ENCODE measurements at regions of chr17 and their contacts with region 1.

Region 1: GRCh38 chr17:64320613-64321553 is 57.8 kb upstream of the TEX2 start:
- DNase-seq: peak; percentile 58 to 74
- H3K4me3 ChIP-seq: no peak overlapping the region
- H3K27ac ChIP-seq: no peak overlapping the region
- H3K4me1 ChIP-seq: no peaks in the 10 kb centered on the region
- H3K27me3 ChIP-seq: no peaks in the 10 kb centered on the region
- CTCF ChIP-seq: peak; percentile 11 to 86 (median 86)
- EP300 ChIP-seq: no peak
- POLR2A ChIP-seq: no peak
- RAD21 ChIP-seq: peak; percentile 73 to 83

Region 2: DNA sequence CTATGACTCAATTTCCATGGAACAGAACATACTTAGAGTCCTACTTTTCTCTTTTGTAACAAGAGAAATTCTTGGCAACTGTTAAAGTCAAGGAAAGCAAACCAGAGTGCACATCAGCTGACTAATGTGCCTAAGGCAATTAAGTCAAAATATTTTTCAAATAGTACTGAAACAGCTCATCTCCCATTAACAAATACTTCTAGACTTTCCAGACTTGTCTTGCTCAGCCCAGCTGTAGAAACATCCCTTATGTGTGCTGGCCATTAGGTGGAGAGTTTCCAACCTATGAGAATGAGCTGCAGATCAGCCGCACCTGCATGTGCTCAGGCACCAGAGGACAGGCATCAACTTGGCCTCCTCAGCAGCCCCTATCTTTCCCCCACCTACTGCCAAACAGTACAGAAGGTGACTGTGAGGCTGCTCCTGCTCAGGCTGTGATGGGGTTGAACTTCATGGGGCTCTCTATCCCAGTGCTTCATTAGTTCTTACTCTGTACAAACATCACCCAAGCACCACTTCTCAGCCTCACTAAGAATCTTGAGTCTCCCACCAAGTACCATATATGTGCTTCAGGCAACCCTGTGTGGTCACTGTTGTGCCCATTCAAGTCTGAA is 90.0 kb before region 1 on chr17:
- CTCF ChIA-PET with region 1: no interaction called
- POLR2A ChIA-PET with region 1: no interaction called
- DNase-seq: no peak
- H3K4me3 ChIP-seq: no peak overlapping the region
- H3K27ac ChIP-seq: no peak overlapping the region
- H3K4me1 ChIP-seq: peaks cover 0 to 6% (median 1%) of the 10 kb centered on the region in 4 experiments; a peak in 3 of 7 replicates
- H3K27me3 ChIP-seq: no peaks in the 10 kb centered on the region
- CTCF ChIP-seq: no peak
- EP300 ChIP-seq: no peak
- POLR2A ChIP-seq: no peak
- RAD21 ChIP-seq: no peak

Region 3: GRCh38 chr17:64332502-64332901 is 11.6 kb after region 1 on chr17:
- CTCF ChIA-PET with region 1: interaction called, 11 read pairs
- POLR2A ChIA-PET with region 1: no interaction called
- DNase-seq: no peak
- H3K4me3 ChIP-seq: no peak overlapping the region
- H3K27ac ChIP-seq: no peak overlapping the region
- H3K4me1 ChIP-seq: 0 out of 7 replicates have a peak, but pooled peaks cover 0 to 2% (median 0%) of the 10 kb centered on the region in 4 experiments
- H3K27me3 ChIP-seq: peaks cover 0 to 8% (median 5%) of the 10 kb centered on the region in 4 experiments; a peak in 4 of 7 replicates
- CTCF ChIP-seq: no peak
- EP300 ChIP-seq: no peak
- POLR2A ChIP-seq: no peak
- RAD21 ChIP-seq: no peak

Region 4: GRCh38 chr17:64357191-64357981 is 36.5 kb after region 1 on chr17:
- CTCF ChIA-PET with region 1: interaction called, 11 read pairs
- POLR2A ChIA-PET with region 1: no interaction called
- DNase-seq: no peak
- H3K4me3 ChIP-seq: no peak overlapping the region
- H3K27ac ChIP-seq: no peak overlapping the region
- H3K4me1 ChIP-seq: no peaks in the 10 kb centered on the region
- H3K27me3 ChIP-seq: no peaks in the 10 kb centered on the region
- CTCF ChIP-seq: peak; percentile 8 to 32 (median 24); a peak in 2 of 4 replicates
- EP300 ChIP-seq: no peak
- POLR2A ChIP-seq: no peak
- RAD21 ChIP-seq: 0 out of 4 replicates have a peak, but pooled peaks of 1 of the 2 experiments have one; percentile 2

Region 5: GRCh38 chr17:64411999-64412771 is 91.3 kb after region 1 on chr17:
- CTCF ChIA-PET with region 1: interaction called, 348 read pairs
- POLR2A ChIA-PET with region 1: interaction called, 4 read pairs
- DNase-seq: peak; percentile 59 to 67
- H3K4me3 ChIP-seq: peak overlapping the region in 3 of 4 experiments; percentile 31 to 51 (median 34); a peak in 6 of 8 replicates
- H3K27ac ChIP-seq: peak overlapping the region; percentile 75
- H3K4me1 ChIP-seq: peaks cover 16 to 27% (median 18%) of the 10 kb centered on the region in 4 experiments
- H3K27me3 ChIP-seq: no peaks in the 10 kb centered on the region
- CTCF ChIP-seq: no peak
- EP300 ChIP-seq: no peak
- POLR2A ChIP-seq: peak in 1 of 2 experiments; percentile 61; a peak in 2 of 3 replicates
- RAD21 ChIP-seq: no peak; a peak in 1 of 4 replicates

Measured in H1 (cell line).